Thyroid gland (tissue), 4 donors: ENCODE measurements at regions of chr17 and their contacts with region 1.

Region 1: DNA sequence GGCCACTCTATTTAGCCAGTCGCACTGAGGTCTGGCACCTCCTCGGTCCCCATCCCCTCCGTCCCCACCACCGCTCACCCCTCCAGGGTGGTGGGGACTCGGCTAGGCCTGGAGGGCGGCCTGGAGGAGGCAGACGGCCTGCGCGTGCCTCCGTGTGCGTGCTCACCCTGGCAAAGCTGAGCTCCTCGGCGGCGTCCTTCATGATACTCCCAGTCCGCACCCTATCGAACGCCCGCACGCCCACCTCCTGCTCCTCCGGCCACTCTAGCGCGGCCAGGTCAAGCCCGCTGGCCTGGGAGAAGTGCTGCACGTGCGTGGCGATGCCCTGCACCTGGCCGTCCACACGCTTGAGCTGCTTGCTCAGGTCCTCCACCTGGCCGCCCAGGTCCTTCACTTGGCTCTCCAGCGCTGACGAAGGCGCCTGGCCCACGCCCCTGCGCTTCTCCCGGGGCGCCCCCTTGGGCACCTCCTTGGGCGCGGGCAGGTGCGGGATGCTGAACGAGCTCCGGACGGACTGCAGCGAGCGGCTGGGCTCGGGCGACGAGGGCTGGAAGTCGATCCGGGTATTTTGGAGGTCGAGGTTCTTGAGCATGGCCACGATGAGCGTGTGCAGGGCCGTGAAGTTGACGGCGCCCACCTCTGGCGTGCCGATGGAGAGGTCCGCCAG is 644 bp downstream of the QRICH2 start:
- DNase-seq: no peak
- H3K4me3 ChIP-seq: no peak overlapping the region
- H3K27ac ChIP-seq: no peak overlapping the region
- H3K4me1 ChIP-seq: no peaks in the 10 kb centered on the region
- H3K27me3 ChIP-seq: no peaks in the 10 kb centered on the region
- CTCF ChIP-seq: no peak
- POLR2A ChIP-seq: no peak

Region 2: GRCh38 chr17:76397687-76398487 is 90.5 kb after region 1 on chr17:
- intact Hi-C with region 1: loop called (anchors 2 kb)
- DNase-seq: peak; percentile 91 to 95
- H3K4me3 ChIP-seq: no peak overlapping the region
- H3K27ac ChIP-seq: peak overlapping the region in 1 of 3 donors; percentile 22
- H3K4me1 ChIP-seq: peaks cover 13 to 33% of the 10 kb centered on the region in 2 donors
- H3K27me3 ChIP-seq: no peaks in the 10 kb centered on the region
- CTCF ChIP-seq: peak; percentile 96 to 98 (median 98)
- POLR2A ChIP-seq: no peak

Region 3: GRCh38 chr17:76458580-76459490 is 151.4 kb after region 1 on chr17:
- intact Hi-C with region 1: loop called (anchors 5 kb)
- DNase-seq: peak; percentile 83 to 86
- H3K4me3 ChIP-seq: no peak overlapping the region
- H3K27ac ChIP-seq: no peak overlapping the region
- H3K4me1 ChIP-seq: no peaks in the 10 kb centered on the region
- H3K27me3 ChIP-seq: no peaks in the 10 kb centered on the region
- CTCF ChIP-seq: peak in 4 of 6 experiments; percentile 70 to 76 (median 72)
- POLR2A ChIP-seq: no peak